Mammary epithelial cell (primary cell): ENCODE measurements at regions of chr1 and their contacts with region 1.

Region 1: DNA sequence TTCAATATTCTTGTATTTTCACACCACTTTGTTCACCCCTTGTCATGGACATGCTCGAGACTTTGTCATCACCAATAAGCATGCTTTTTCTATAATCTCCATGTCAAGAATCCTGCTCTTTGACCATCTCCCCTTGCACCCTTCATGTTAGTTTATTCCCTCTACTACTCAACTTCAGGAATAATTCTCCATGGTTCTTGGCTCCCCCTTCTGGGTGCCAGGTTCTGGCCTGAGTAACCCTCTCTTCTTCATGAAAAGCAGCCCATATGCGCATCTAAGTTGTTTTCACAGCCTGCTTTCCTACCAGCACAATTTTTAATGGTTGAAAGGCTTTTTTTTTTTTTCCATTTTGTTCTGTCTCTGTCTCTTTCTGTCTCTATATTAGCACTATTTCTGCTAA is 160.7 kb downstream of the LEPR start:
- DNase-seq: no peak
- H3K4me3 ChIP-seq: no peak overlapping the region
- H3K27ac ChIP-seq: no peak overlapping the region
- H3K4me1 ChIP-seq: no peaks in the 10 kb centered on the region
- H3K27me3 ChIP-seq: no peaks in the 10 kb centered on the region
- CTCF ChIP-seq: peak in 1 of 2 donors; percentile 26

Region 2: DNA sequence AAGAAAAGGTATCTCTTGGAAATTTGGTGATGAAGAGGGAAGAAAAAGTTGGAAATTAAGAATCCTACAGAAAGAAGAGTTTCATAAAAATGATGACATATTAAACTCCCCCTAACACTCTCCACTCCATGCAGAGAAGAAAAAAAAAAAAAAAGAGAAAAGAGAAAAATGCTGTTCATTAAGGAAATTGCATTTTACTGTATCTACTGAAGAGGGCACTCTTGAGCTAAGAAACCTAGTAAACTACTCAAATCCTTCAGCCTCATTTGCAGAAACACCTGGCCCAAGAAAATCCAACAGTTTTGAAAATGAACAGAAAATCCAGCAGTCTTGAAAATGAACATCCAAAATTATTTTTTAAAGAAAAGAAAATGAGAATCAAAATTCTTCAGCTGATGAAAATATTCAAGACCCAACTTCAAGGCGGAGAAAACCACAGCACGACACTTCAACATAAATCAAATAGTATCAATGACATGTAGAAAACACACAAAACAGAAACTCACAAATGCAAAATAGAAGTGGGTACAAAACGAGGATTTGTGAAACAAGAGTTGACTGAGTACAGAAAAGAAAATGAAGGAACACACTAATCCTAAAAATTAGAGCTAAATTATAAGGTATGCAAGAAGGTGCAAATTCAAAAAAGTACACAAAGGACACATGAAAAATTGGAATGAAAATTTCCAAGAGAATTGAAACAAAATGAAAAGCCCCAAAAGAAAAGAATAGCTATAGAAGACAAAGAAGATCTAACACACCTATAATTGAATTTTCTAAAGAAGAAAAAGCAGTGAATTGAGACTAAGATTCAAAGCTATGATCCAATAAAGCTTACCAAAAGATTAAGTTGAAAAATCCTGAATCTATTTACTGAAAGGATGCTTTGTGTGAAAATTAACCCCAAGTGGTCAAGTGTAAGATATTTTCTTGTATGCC is 345.0 kb before region 1 on chr1:
- CTCF ChIA-PET with region 1: no interaction called
- dilution Hi-C with region 1: no loop called
- in situ Hi-C with region 1: no loop called
- intact Hi-C with region 1: loop called (anchors 5 kb)
- DNase-seq: peak; percentile 33
- H3K4me3 ChIP-seq: no peak overlapping the region
- H3K27ac ChIP-seq: no peak overlapping the region
- H3K4me1 ChIP-seq: peaks cover under 1% of the 10 kb centered on the region
- H3K27me3 ChIP-seq: no peaks in the 10 kb centered on the region
- CTCF ChIP-seq: peak; percentile 60 to 61

Region 3: GRCh38 chr1:65830306-65830705 is 249.2 kb after region 1 on chr1:
- CTCF ChIA-PET with region 1: no interaction called
- dilution Hi-C with region 1: no loop called
- in situ Hi-C with region 1: no loop called
- intact Hi-C with region 1: no loop called
- DNase-seq: no peak
- H3K4me3 ChIP-seq: no peak overlapping the region
- H3K27ac ChIP-seq: no peak overlapping the region
- H3K4me1 ChIP-seq: no peaks in the 10 kb centered on the region
- H3K27me3 ChIP-seq: no peaks in the 10 kb centered on the region
- CTCF ChIP-seq: no peak